ENCODE measurements at regions of chr5 and their contacts with region 1.

Region 1: DNA sequence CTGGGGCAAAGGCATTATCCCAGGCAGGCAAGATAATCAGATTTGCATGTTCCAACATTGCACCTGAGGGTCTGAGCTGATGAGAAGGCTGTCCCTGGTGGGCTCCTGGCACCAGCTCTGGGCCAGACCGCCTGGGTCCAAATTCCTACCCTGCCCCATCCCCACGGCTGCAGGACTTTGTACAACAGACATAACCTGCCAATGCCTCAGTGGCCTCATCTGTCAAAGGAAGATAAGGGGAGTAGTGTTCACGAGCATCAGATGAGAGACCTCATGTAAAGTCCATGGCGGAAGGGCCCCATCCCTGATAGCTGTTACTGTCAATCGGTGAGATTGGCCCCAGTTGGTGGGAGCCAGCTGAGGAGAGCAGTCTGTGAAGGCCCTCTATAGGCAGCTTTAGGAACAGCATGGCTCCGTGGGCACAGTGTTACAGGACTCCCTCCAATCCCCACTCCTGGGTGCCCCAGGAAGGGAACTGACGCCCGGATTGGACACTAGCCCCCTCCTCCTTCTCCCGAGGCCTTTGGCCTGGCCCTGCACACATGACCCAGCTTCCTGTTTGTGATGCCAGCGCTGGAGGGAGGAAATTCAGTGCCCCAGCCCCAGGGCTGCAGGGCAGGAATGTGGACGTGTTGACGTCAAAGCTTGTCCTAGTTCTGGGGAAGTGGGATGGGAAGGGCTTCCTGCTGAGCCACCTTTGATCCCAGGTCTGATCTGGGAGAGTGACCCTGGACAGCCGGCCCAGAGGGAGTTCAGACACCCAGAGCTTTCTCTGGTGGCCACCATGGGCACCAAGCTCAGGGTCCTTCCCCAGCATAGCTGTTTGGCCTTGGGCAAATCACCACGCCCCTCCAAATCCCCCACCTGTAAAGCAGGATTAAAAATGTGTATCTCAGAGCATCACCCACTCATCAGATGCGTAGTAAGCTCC is 56.2 kb downstream of the DUSP1 start:
- DNase-seq: peak; percentile 71
- H3K4me3 ChIP-seq: no peak overlapping the region
- H3K27ac ChIP-seq: no peak overlapping the region
- H3K4me1 ChIP-seq: no peaks in the 10 kb centered on the region
- CTCF ChIP-seq: peak; percentile 84

Region 2: GRCh38 chr5:172770675-172771438 is 56.1 kb after region 1 on chr5 and contains the start of gene DUSP1:
- CTCF ChIA-PET with region 1: interaction called, 6 read pairs
- POLR2A ChIA-PET with region 1: interaction called, 3 read pairs
- intact Hi-C with region 1: loop called (anchors 1 kb)
- DNase-seq: peak; percentile 93
- H3K4me3 ChIP-seq: peak within 1 kb of the TSS; percentile 82
- H3K27ac ChIP-seq: peak within 1 kb of the TSS; percentile 44
- H3K4me1 ChIP-seq: peaks cover 29% of the 10 kb centered on the region
- CTCF ChIP-seq: peak; percentile 59
- total RNA-seq, gene DUSP1: 5.3 and 7.0 TPM in 2 replicates

Region 3: DNA sequence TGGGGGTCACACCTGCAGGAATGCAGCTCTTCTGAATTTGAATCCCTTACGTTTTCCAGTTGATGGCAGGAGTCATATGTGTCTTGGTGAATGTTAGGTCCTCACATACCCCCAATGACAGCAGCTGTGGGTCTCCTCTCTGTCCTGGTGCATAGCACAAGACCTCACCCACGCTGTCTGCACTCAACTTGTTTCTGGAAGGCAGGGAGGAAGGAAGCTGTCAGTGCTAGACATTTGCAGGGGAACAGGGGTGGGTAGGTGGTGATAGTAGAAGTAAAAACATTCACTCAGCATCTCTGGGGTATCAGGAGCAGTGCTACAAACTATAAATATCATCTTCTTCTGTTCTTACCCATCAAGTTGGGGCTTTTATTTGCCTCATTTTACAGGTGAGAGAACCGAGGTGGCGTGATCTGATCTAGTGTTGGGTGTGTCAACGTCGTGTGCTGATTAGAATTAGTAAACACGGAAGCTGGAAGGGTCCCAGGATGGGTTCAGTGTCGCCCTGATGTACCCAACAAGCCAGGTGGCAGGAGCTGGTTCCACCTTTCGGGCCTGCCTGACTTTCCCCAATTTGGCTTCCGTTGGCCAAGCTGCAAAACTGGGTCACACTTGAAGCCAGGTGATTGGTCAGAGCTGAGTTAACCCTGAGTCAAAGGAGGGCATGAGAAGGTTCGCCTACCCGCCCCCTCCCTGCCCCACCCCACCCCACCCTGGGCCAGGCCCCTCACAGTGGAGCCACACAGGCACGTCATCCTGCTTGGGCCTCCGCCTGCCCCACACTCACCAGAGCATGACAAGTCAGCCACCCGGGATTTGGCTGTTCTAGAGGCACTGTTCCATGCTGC is 135.1 kb after region 1 on chr5:
- CTCF ChIA-PET with region 1: no interaction called
- POLR2A ChIA-PET with region 1: no interaction called
- intact Hi-C with region 1: loop called (anchors 5 kb)
- DNase-seq: peak; percentile 46
- H3K4me3 ChIP-seq: no peak overlapping the region
- H3K27ac ChIP-seq: peak overlapping the region; percentile 38
- H3K4me1 ChIP-seq: peaks cover 34% of the 10 kb centered on the region
- CTCF ChIP-seq: no peak

Region 4: DNA sequence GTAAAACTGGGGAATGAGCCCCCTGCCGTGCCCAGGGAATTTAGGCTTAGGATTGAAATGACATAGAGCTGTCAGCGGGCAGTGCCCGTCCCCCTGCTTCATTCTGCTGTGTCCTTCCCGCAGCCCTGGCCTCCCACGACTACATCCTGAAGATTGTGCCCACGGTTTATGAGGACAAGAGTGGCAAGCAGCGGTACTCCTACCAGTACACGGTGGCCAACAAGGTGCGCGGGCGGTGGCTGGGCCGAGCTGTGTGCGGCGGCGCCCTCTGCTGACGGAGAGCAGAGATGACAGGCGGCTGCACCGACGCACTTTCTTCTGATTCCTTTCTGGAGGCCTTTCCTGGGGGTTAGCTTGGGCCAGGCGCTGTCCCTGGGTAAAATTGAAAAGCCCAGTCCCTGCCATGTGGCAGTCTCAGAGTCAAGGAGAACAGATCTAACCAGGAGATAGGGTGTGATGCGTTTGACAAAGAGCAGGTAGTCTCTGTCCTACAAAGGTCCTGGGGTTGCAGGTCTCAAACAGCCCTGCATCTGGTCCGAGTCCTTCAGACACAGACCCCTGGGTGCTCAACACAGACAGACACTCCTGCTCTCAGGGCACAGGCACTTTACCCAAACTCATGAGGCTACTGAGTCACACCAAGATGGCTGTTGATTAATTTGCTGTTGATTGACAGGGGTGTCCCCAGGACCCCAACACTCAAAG is 217.7 kb after region 1 on chr5:
- CTCF ChIA-PET with region 1: interaction called, 18 read pairs
- POLR2A ChIA-PET with region 1: interaction called, 5 read pairs
- intact Hi-C with region 1: loop called (anchors 1 kb)
- DNase-seq: peak; percentile 64
- H3K4me3 ChIP-seq: no peak overlapping the region
- H3K27ac ChIP-seq: no peak overlapping the region
- H3K4me1 ChIP-seq: no peaks in the 10 kb centered on the region
- CTCF ChIP-seq: peak; percentile 91

Region 5: DNA sequence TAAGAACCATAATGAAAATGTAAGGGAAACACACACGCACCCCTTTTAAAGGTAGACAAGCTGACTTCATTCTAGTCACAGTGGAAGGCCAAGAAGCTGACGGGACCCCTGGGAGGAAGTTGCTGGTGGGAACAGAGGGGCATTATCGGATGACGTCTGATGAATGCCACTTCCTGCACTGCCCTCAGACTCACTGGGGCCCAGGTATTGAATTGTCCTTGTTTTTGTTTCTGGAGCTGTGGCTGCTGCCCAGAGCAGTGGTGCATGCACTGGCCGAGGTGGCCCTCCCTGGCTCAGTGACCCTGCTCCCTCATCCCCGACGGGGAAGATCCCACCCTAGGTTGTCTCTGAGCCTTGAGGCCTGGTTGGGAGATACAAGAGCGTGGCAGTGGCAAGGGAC is 229.2 kb after region 1 on chr5:
- CTCF ChIA-PET with region 1: no interaction called
- POLR2A ChIA-PET with region 1: no interaction called
- intact Hi-C with region 1: no loop called
- DNase-seq: no peak
- H3K4me3 ChIP-seq: no peak overlapping the region
- H3K27ac ChIP-seq: no peak overlapping the region
- H3K4me1 ChIP-seq: no peaks in the 10 kb centered on the region
- CTCF ChIP-seq: no peak

Region 6: GRCh38 chr5:173187054-173187789 is 472.5 kb after region 1 on chr5:
- CTCF ChIA-PET with region 1: no interaction called
- POLR2A ChIA-PET with region 1: no interaction called
- intact Hi-C with region 1: loop called (anchors 5 kb)
- DNase-seq: peak; percentile 62
- H3K4me3 ChIP-seq: no peak overlapping the region
- H3K27ac ChIP-seq: no peak overlapping the region
- H3K4me1 ChIP-seq: no peaks in the 10 kb centered on the region
- CTCF ChIP-seq: peak; percentile 70